Endothelial cell of umbilical vein (primary cell): ENCODE measurements at regions of chr10 and their contacts with region 1.

Region 1: DNA sequence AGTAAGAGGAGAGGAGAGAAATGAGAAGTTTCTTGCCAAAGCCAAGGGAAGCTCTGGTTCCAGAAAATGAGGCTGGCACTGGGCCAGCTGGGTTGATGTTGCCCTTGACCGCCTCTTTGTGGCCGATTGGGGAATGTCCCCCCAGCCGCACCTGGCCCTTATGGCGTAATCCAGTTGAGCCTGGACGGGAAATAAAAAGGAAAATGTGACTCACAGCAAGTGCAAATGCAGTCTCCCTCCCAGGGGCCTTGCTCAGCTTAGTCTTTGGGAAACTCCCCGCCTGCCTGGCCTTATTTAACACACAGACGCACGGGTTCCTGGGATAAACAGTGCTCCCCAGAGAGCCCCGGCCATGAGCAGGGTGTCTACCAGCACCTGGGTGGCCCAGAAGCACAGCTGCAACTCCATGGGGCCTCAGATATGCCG is 174.8 kb downstream of the KIAA1217 start:
- DNase-seq: peak; percentile 74
- H3K4me3 ChIP-seq: no peak overlapping the region
- H3K27ac ChIP-seq: peak overlapping the region; percentile 20
- H3K4me1 ChIP-seq: no peaks in the 10 kb centered on the region
- H3K27me3 ChIP-seq: no peaks in the 10 kb centered on the region
- CTCF ChIP-seq: peak; percentile 37 to 46
- POLR2A ChIP-seq: no peak

Region 2: GRCh38 chr10:24370877-24371795 is 12.6 kb before region 1 on chr10:
- CTCF ChIA-PET with region 1: no interaction called
- POLR2A ChIA-PET with region 1: no interaction called
- dilution Hi-C with region 1: no loop called
- intact Hi-C with region 1: no loop called
- DNase-seq: no peak
- H3K4me3 ChIP-seq: no peak overlapping the region
- H3K27ac ChIP-seq: no peak overlapping the region
- H3K4me1 ChIP-seq: no peaks in the 10 kb centered on the region
- H3K27me3 ChIP-seq: no peaks in the 10 kb centered on the region
- CTCF ChIP-seq: no peak
- POLR2A ChIP-seq: no peak

Region 3: GRCh38 chr10:24449321-24449740 is 65.6 kb after region 1 on chr10:
- CTCF ChIA-PET with region 1: no interaction called
- POLR2A ChIA-PET with region 1: no interaction called
- dilution Hi-C with region 1: no loop called
- intact Hi-C with region 1: loop called (anchors 1 kb)
- DNase-seq: peak; percentile 43
- H3K4me3 ChIP-seq: peak overlapping the region in 2 of 3 experiments; percentile 18 to 44
- H3K27ac ChIP-seq: peak overlapping the region; percentile 45
- H3K4me1 ChIP-seq: peaks cover 12% of the 10 kb centered on the region
- H3K27me3 ChIP-seq: no peaks in the 10 kb centered on the region
- CTCF ChIP-seq: no peak
- POLR2A ChIP-seq: no peak

Region 4: DNA sequence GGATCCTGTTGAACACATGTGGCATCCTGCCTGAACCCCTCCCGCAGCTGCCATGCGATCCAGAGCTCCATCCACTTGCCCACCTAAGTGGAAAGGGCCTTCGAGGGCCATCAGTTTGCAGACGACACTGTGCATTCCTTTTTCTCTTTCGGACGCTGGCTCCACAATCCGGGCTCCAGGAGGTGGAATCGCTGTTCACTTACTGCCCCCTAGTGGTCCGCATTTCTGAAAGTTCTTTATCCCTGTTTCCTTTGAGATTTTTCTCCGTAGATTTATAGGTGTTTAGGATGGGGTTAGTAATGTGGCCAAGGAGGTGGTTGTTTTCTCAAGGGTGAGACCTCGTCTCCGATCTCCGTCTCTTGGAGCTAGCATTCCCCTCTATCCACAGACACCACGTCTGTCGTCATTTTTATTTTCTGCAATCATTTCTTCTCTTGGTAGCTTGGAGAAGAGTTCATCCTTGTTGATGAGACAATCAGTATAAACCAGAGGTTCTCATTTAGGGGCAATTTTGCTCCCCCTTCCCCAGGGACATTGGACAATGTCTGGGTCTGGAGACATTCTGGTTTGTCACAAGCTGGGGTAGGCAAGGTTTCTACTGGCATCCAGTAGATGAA is 135.4 kb after region 1 on chr10:
- CTCF ChIA-PET with region 1: interaction called, 6 read pairs
- POLR2A ChIA-PET with region 1: no interaction called
- dilution Hi-C with region 1: no loop called
- intact Hi-C with region 1: loop called (anchors 2 kb)
- DNase-seq: peak; percentile 50
- H3K4me3 ChIP-seq: no peak overlapping the region
- H3K27ac ChIP-seq: no peak overlapping the region
- H3K4me1 ChIP-seq: no peaks in the 10 kb centered on the region
- H3K27me3 ChIP-seq: no peaks in the 10 kb centered on the region
- CTCF ChIP-seq: peak; percentile 72 to 76
- POLR2A ChIP-seq: no peak

Region 5: DNA sequence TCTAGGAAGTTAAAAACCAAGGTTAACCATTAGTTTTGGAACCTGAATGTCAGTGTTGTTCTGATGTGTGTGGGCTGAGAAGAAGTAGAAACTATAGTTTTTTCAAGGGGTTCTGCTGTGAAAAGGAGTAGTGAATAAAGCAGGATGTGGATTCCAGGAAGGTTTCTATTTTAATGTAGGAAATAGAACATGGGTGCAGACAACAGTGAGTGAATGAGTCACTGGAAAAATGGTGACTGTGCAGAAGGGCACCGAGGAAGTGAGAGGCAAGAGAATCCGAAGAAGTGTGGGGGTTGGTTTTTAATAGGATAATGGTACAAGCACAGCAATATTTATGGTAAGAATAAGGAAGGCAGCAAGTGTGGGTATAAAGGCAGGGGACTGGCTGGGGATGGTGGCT is 219.6 kb after region 1 on chr10:
- CTCF ChIA-PET with region 1: no interaction called
- POLR2A ChIA-PET with region 1: no interaction called
- dilution Hi-C with region 1: no loop called
- intact Hi-C with region 1: no loop called
- DNase-seq: no peak
- H3K4me3 ChIP-seq: no peak overlapping the region
- H3K27ac ChIP-seq: no peak overlapping the region
- H3K4me1 ChIP-seq: no peaks in the 10 kb centered on the region
- H3K27me3 ChIP-seq: no peaks in the 10 kb centered on the region
- CTCF ChIP-seq: no peak
- POLR2A ChIP-seq: no peak